CD4-positive, alpha-beta memory T cell (primary cell): ENCODE measurements at regions of chr16 and their contacts with region 1.

Region 1: DNA sequence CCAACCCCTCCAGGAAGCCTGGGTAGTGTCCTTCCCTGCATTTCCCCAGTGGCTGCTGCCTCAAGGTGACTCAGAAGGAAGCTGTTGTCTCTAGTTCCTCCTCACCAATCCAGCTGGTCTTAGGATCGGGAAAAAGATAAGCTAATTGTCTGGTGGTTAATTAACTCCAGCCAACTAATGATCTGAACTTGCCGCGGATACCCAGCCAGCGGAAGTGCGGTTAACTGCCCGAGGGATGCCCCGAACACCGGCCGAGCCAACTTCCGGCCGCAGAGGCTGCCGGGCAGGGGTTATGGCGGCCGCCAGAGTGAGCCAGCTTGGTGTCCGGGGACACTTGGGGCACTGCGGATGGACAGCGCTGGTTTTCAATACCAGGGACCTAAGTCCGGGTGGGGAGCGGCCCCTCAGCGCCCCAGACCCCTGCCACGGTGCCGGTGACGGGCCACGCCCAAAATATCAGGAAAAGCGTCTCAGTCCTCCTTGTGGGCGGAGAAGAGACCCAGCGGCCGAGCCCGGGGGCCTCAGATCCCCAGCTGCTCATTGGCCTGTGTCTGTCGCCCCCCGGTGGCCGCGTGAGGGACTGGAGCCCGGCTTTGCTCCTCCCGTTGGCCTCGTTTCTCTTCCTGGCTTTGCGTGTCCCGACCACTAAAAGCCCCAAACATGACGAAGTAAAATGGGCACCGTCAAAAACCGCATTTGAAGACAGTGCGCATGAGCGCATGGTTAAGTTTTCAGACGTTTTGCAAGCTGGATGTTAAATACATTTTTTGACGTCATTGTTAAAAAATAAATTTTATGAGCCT is 10.2 kb upstream of the PRSS22 start:
- DNase-seq: peak; percentile 94 to 98 (median 96)
- H3K4me3 ChIP-seq: peak overlapping the region; percentile 17 to 76
- H3K4me3 Mint-ChIP-seq: peak overlapping the region; percentile 77 to 90 (median 88)
- H3K27ac ChIP-seq: peak overlapping the region; percentile 69
- H3K27ac Mint-ChIP-seq: peak overlapping the region; percentile 54 to 94 (median 91)
- H3K4me1 ChIP-seq: peaks cover 13% of the 10 kb centered on the region
- H3K4me1 Mint-ChIP-seq: peaks cover 7 to 25% (median 13%) of the 10 kb centered on the region in 4 donors
- H3K27me3 ChIP-seq: no peaks in the 10 kb centered on the region
- H3K27me3 Mint-ChIP-seq: no peaks in the 10 kb centered on the region

Region 2: GRCh38 chr16:2682209-2683021 is 185.8 kb before region 1 on chr16 and contains the start of gene KCTD5:
- CTCF ChIA-PET with region 1: no interaction called
- POLR2A ChIA-PET with region 1: interaction called, 9 read pairs
- intact Hi-C with region 1: loop called (anchors 1 kb)
- DNase-seq: peak; percentile 94 to 95 (median 94)
- H3K4me3 ChIP-seq: peak within 1 kb of the TSS; percentile 96 to 98
- H3K4me3 Mint-ChIP-seq: peak within 1 kb of the TSS; percentile 92 to 97 (median 94)
- H3K27ac ChIP-seq: peak within 1 kb of the TSS; percentile 79
- H3K27ac Mint-ChIP-seq: peak within 1 kb of the TSS; percentile 87 to 96 (median 95)
- H3K4me1 ChIP-seq: peaks cover 34% of the 10 kb centered on the region
- H3K4me1 Mint-ChIP-seq: peaks cover 15 to 30% (median 24%) of the 10 kb centered on the region in 4 donors
- H3K27me3 ChIP-seq: no peaks in the 10 kb centered on the region
- H3K27me3 Mint-ChIP-seq: no peaks in the 10 kb centered on the region
- total RNA-seq, gene KCTD5: 26.7 to 27.1 TPM

Region 3: GRCh38 chr16:2752035-2752849 is 115.9 kb before region 1 on chr16 and contains the start of gene SRRM2:
- CTCF ChIA-PET with region 1: no interaction called
- POLR2A ChIA-PET with region 1: interaction called, 11 read pairs
- intact Hi-C with region 1: loop called (anchors 10 kb)
- DNase-seq: peak; percentile 96 to 98 (median 96)
- H3K4me3 ChIP-seq: peak within 1 kb of the TSS; percentile 95 to 97
- H3K4me3 Mint-ChIP-seq: peak within 1 kb of the TSS; percentile 91 to 97 (median 94)
- H3K27ac ChIP-seq: peak within 1 kb of the TSS; percentile 97
- H3K27ac Mint-ChIP-seq: peak within 1 kb of the TSS; percentile 97 to 100 (median 99)
- H3K4me1 ChIP-seq: peaks cover 49% of the 10 kb centered on the region
- H3K4me1 Mint-ChIP-seq: peaks cover 34 to 68% (median 48%) of the 10 kb centered on the region in 4 donors
- H3K27me3 ChIP-seq: no peaks in the 10 kb centered on the region
- H3K27me3 Mint-ChIP-seq: no peaks in the 10 kb centered on the region
- total RNA-seq, gene SRRM2: 1,118 to 1,137 TPM

Region 4: GRCh38 chr16:2838928-2839327 is 29.3 kb before region 1 on chr16:
- CTCF ChIA-PET with region 1: interaction called, 35 read pairs
- POLR2A ChIA-PET with region 1: interaction called, 16 read pairs
- intact Hi-C with region 1: loop called (anchors 1 kb)
- DNase-seq: peak; percentile 39 to 64 (median 47)
- H3K4me3 ChIP-seq: no peak overlapping the region
- H3K4me3 Mint-ChIP-seq: peak overlapping the region in 2 of 8 donors; percentile 18 to 26
- H3K27ac ChIP-seq: no peak overlapping the region
- H3K27ac Mint-ChIP-seq: peak overlapping the region in 5 of 7 donors; percentile 15 to 72 (median 64)
- H3K4me1 ChIP-seq: peaks cover 35% of the 10 kb centered on the region
- H3K4me1 Mint-ChIP-seq: peaks cover 16 to 58% (median 33%) of the 10 kb centered on the region in 4 donors
- H3K27me3 ChIP-seq: no peaks in the 10 kb centered on the region
- H3K27me3 Mint-ChIP-seq: peaks cover 0 to 7% of the 10 kb centered on the region in 2 donors

Region 5: DNA sequence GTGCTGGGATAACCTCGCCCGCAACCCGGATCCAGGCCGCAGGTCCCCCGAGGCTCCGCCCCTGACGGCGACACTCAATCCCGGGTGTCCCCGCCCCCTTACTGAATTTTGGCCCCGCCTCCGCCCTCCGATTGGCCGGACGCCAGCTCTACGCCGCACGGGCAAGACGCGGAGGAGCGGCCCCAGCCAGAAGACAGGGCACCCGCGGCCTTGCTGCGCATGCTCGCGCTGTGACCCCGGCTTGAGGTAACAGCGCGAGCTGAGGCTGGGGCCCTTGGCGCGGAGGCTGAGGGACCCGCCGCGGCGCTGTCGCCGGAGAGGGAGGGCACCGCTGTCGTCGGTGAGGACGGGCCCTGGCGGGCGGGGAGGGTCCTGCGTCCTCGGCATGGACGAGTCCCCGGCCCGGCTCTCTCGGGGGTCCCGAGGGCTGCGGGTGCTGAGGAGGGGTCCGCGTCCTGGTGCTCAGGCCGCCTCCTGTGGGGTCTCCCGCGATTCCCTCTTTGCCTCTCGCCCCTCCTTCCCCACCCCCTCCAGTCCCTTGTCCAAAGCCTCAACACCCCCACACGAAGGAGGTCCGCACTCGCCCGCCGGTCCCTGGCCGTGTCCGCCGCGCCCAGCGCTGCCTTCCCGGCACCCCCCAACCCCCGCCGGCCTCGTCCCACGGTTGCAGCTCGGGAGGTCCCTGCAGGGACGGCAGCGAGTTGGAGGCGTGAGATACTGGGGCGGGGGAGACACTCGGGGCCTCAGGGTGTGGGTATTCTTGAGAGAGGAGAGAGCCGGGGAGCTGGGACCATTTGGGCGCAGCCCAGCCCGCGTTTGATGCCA is 15.1 kb after region 1 on chr16 and contains the start of gene FLYWCH2:
- CTCF ChIA-PET with region 1: interaction called, 9 read pairs
- POLR2A ChIA-PET with region 1: interaction called, 30 read pairs
- intact Hi-C with region 1: loop called (anchors 1 kb)
- DNase-seq: peak; percentile 99 to 100 (median 100)
- H3K4me3 ChIP-seq: peak within 1 kb of the TSS; percentile 61 to 88
- H3K4me3 Mint-ChIP-seq: peak within 1 kb of the TSS; percentile 90 to 95 (median 92)
- H3K27ac ChIP-seq: peak within 1 kb of the TSS; percentile 88
- H3K27ac Mint-ChIP-seq: peak within 1 kb of the TSS; percentile 98 to 99 (median 98)
- H3K4me1 ChIP-seq: peaks cover 7% of the 10 kb centered on the region
- H3K4me1 Mint-ChIP-seq: peaks cover 8 to 25% (median 16%) of the 10 kb centered on the region in 4 donors
- H3K27me3 ChIP-seq: no peaks in the 10 kb centered on the region
- H3K27me3 Mint-ChIP-seq: no peaks in the 10 kb centered on the region
- total RNA-seq, gene FLYWCH2: 24.1 to 27.1 TPM

Region 6: DNA sequence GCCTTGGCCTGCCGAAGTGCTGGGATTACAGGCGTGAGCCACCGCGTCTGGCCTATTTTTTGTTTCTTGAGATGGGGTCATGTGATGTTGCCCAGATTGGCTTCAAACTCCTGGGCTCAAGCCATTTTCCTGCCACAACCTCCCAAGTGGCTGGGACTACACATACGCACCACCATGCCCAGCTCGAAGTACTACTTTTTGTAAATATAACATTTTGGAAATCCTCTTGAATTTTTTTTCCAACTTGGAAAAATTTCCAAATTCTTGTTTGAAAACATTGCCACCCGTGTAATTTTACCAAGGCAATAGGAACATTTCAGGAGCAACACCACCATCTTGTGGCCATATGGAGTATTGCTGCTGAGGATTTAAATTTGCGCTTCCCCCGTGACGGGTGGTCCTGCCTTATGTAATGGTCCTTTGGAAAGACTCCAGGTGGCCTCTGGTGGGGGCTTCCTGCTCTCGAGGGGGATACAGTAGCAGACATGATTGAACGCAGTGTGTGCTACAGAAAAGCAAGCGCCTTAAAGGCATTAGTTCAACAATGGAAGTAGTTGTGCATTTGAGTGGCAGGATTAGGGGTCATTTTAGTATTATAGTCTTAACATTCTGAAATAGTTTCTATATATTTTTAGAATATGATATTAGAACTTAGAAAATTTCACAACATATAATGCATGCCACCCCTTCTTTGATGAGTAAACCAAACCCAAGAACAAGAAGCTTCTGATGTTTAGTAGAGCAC is 51.5 kb after region 1 on chr16:
- CTCF ChIA-PET with region 1: interaction called, 12 read pairs
- POLR2A ChIA-PET with region 1: interaction called, 3 read pairs
- intact Hi-C with region 1: no loop called
- DNase-seq: peak; percentile 47 to 68 (median 62)
- H3K4me3 ChIP-seq: no peak overlapping the region
- H3K4me3 Mint-ChIP-seq: no peak overlapping the region
- H3K27ac ChIP-seq: no peak overlapping the region
- H3K27ac Mint-ChIP-seq: peak overlapping the region; percentile 50 to 90 (median 78)
- H3K4me1 ChIP-seq: no peaks in the 10 kb centered on the region
- H3K4me1 Mint-ChIP-seq: peaks cover 5 to 12% (median 6%) of the 10 kb centered on the region in 4 donors
- H3K27me3 ChIP-seq: no peaks in the 10 kb centered on the region
- H3K27me3 Mint-ChIP-seq: no peaks in the 10 kb centered on the region